ENCODE measurements at regions of chr10 and their contacts with region 1.

Region 1: GRCh38 chr10:110395725-110396651 is 91.3 kb upstream of the SMNDC1 start:
- DNase-seq: peak in 3 of 35 experiments; percentile 3 to 56 (median 13)
- ATAC-seq: peak in 1 of 4 experiments; percentile 74
- H3K4me3 ChIP-seq: no peak overlapping the region
- H3K4me3 Mint-ChIP-seq: no peak overlapping the region
- H3K27ac ChIP-seq: no peak overlapping the region
- H3K27ac Mint-ChIP-seq: no peak overlapping the region
- H3K4me1 ChIP-seq: peaks cover 0 to 5% of the 10 kb centered on the region in 2 experiments
- H3K4me1 Mint-ChIP-seq: peaks cover 0 to 8% (median 6%) of the 10 kb centered on the region in 3 donors
- H3K27me3 ChIP-seq: peaks cover 0 to 8% of the 10 kb centered on the region in 2 experiments
- H3K27me3 Mint-ChIP-seq: peaks cover 2 to 6% of the 10 kb centered on the region in 2 donors

Region 2: GRCh38 chr10:110533149-110533548 is 137.2 kb after region 1 on chr10:
- CTCF ChIA-PET with region 1: no interaction called
- POLR2A ChIA-PET with region 1: interaction called in 1 of 2 experiments, 11 read pairs
- DNase-seq: no peak
- ATAC-seq: no peak
- H3K4me3 ChIP-seq: no peak overlapping the region
- H3K4me3 Mint-ChIP-seq: no peak overlapping the region
- H3K27ac ChIP-seq: no peak overlapping the region
- H3K27ac Mint-ChIP-seq: no peak overlapping the region
- H3K4me1 ChIP-seq: peaks cover 4 to 37% of the 10 kb centered on the region in 2 experiments
- H3K4me1 Mint-ChIP-seq: peaks cover 39 to 55% (median 40%) of the 10 kb centered on the region in 3 donors
- H3K27me3 ChIP-seq: no peaks in the 10 kb centered on the region
- H3K27me3 Mint-ChIP-seq: peaks cover 0 to 4% of the 10 kb centered on the region in 2 donors

Region 3: DNA sequence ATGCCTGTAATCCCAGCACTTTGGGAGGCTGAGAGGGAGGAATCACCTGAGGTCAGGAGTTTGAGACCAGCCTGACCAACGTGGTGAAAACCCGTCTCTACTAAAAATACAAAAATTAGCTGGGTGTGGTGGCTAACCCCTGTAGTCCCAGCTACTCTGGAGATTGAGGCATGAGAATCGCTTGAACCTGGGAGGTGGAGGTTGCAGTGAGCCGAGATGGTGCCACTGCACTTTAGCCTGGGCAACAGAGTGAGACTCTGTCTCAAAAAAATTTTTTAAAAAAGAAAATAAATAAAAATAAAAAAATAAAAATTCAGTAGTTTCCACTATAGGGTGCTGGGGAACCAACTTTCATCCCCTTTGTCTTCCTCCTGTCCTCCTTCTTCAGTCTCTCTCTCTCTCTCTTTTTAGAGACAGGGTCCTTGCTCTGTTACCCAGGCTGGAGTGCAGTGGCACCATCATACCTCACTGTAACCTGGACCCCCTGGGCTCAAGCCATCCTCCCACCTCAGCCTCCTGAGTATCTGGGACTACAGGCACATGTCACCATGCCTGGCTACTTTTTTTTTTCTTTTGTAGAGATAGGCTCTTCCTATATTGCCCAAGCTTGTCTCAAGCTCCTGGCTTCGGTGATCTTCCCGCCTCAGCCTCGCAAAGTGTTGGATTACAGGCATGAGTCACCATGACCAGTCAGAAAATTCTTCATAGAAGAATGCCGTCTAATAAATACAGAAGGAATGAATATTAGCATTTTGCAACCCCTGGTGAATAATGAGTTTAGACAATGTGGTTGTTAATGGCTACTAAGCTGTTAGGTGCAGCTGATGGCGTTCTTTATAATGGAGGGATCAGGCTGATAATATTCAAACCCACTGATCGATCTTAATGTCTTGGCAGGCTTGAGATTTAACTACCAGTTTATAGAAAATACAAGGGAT is 268.8 kb after region 1 on chr10:
- CTCF ChIA-PET with region 1: no interaction called
- POLR2A ChIA-PET with region 1: no interaction called
- DNase-seq: no peak
- ATAC-seq: no peak
- H3K4me3 ChIP-seq: no peak overlapping the region
- H3K4me3 Mint-ChIP-seq: no peak overlapping the region
- H3K27ac ChIP-seq: no peak overlapping the region
- H3K27ac Mint-ChIP-seq: no peak overlapping the region
- H3K4me1 ChIP-seq: peaks cover 0 to 2% of the 10 kb centered on the region in 2 experiments
- H3K4me1 Mint-ChIP-seq: peaks cover 3 to 7% (median 6%) of the 10 kb centered on the region in 3 donors
- H3K27me3 ChIP-seq: peaks cover 0 to 4% of the 10 kb centered on the region in 2 experiments
- H3K27me3 Mint-ChIP-seq: peaks cover 0 to 27% of the 10 kb centered on the region in 2 donors

Measured in T-cell (primary cell).